HCT116 (cell line): ENCODE measurements at regions of chr18 and their contacts with region 1.

Region 1: DNA sequence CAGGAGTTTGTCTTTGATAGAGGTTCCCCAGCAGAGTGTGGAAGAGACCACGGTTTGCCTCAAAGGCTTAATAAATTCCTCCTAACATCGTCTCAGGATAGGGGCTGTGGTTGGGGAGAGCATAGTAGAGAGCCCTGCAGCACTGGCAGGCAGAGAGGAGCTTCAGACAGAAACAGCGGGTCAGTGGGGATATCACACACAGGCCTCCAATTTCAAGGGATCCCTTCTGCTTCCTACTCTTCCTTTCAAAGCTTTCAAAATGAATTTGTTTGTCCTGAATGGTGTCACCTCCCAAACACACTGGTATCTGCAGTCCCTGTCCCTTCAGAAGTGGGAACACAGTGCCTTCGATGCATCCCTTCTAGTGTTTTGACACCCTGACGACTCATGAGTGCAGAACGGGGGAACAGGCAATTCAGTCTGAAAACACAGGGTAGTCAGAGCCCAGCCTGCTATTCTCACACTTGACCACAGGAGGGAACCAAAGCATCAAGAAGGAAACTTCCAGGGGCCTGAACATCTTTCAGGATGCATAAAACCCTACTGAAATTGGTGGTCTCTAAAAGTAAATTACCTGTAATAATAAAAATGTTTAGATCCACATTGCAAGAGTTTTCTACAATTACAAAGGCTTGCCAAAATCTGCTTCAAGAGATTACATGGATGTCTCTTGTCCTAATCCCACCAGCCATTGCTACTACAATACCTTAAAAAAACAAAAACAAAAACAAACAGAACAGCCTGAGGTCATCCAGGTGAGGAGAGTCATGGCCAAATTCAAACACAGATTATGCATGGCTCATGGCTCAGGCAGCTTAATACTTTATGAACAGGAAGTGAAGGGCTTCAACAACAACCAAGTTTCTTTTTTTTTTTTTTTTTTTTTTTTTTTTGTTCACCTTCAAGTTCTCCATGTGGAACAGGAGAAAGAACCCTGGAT is 49.8 kb downstream of the SLC14A2 start:
- DNase-seq: peak; percentile 37
- ATAC-seq: peak; percentile 85
- H3K4me3 ChIP-seq: no peak overlapping the region
- H3K27ac ChIP-seq: no peak overlapping the region
- H3K4me1 ChIP-seq: no peaks in the 10 kb centered on the region
- H3K27me3 ChIP-seq: no peaks in the 10 kb centered on the region
- CTCF ChIP-seq: peak; percentile 73 to 95 (median 90)
- POLR2A ChIP-seq: no peak
- RAD21 ChIP-seq: peak; percentile 85

Region 2: DNA sequence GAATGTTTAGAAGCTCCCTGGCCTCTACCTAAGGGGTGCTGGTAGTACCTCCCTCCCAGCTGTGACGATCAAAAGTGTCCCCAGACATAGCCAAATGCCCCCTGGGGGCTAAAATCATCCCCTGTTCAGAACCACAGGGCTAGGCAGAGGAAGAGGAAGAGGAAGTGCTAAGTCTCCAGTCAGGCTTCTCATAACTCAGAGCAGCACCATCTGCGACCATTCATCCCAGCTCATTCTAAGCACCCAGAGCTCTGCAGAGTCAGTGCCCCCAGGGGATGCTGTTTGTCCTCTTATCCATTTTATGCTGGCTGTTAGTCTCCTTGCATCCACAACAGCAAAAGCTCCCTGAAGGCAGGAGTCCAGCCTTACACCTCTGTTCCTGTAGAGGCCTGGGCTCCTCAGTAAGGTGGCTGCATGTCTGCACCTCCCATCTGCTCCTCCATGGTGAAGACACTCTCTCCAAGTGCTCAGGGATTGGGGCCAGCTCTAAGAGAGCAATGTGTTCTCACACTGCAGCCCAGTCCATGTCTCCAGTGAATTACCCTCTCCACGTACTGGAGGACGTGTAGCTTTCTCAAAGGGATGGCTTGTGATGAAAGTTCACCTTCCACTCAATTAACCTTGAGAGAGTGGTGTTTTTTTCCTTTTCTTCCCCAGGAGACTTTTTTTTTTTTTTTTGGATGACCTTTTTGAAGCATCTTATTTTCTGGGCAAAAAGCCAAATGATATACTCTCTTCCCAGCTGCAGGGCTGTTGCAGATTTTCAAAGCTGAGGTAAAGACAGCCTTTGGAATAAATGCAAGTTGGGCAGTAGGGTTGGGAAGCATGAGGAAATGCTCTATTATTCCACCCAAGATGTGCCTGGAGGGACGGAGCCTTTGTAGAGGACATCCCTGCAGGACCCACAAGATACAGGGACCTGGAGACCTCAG is 208.7 kb before region 1 on chr18:
- CTCF ChIA-PET with region 1: no interaction called
- POLR2A ChIA-PET with region 1: no interaction called
- RAD21 ChIA-PET with region 1: no interaction called
- intact Hi-C with region 1: no loop called
- DNase-seq: no peak
- ATAC-seq: no peak
- H3K4me3 ChIP-seq: no peak overlapping the region
- H3K27ac ChIP-seq: no peak overlapping the region
- H3K4me1 ChIP-seq: no peaks in the 10 kb centered on the region
- H3K27me3 ChIP-seq: no peaks in the 10 kb centered on the region
- CTCF ChIP-seq: no peak
- POLR2A ChIP-seq: no peak
- RAD21 ChIP-seq: no peak

Region 3: DNA sequence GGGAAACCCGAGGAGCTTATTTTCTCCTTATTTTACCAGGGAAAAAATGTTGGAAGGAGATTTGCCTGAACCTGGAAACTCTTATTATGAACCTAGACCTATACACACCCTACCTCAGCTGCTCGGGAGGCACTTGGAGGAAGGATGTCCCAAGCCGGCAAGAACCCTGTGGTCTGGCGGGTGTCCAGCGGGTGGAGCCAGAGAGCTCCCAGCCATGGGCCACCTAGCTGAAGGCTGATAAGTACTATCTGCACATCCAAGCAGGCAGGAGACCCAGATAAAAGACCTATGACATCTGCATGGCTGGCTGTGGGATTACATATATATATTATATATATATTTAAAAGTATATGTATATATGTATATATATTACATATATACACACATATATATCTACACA is 57.8 kb after region 1 on chr18:
- CTCF ChIA-PET with region 1: no interaction called
- POLR2A ChIA-PET with region 1: no interaction called
- RAD21 ChIA-PET with region 1: no interaction called
- intact Hi-C with region 1: loop called (anchors 2 kb)
- DNase-seq: peak; percentile 57
- ATAC-seq: peak; percentile 100
- H3K4me3 ChIP-seq: no peak overlapping the region
- H3K27ac ChIP-seq: no peak overlapping the region
- H3K4me1 ChIP-seq: no peaks in the 10 kb centered on the region
- H3K27me3 ChIP-seq: 0 out of 2 replicates have a peak, but pooled peaks cover 6% of the 10 kb centered on the region
- CTCF ChIP-seq: peak; percentile 74 to 94 (median 78)
- POLR2A ChIP-seq: no peak
- RAD21 ChIP-seq: peak; percentile 82

Region 4: GRCh38 chr18:45793306-45793965 is 128.3 kb after region 1 on chr18:
- CTCF ChIA-PET with region 1: no interaction called
- POLR2A ChIA-PET with region 1: no interaction called
- RAD21 ChIA-PET with region 1: no interaction called
- intact Hi-C with region 1: no loop called
- DNase-seq: peak; percentile 75
- ATAC-seq: peak; percentile 91
- H3K4me3 ChIP-seq: no peak overlapping the region
- H3K27ac ChIP-seq: peak overlapping the region; percentile 35; the same call in 1 of the 2 replicates
- H3K4me1 ChIP-seq: peaks cover 8 to 16% of the 10 kb centered on the region in 2 experiments
- H3K27me3 ChIP-seq: no peaks in the 10 kb centered on the region
- CTCF ChIP-seq: no peak
- POLR2A ChIP-seq: no peak
- RAD21 ChIP-seq: peak; percentile 20; the same call in 1 of the 2 replicates

Region 5: GRCh38 chr18:45910405-45911023 is 245.4 kb after region 1 on chr18:
- CTCF ChIA-PET with region 1: interaction called, 23 read pairs
- POLR2A ChIA-PET with region 1: no interaction called
- RAD21 ChIA-PET with region 1: no interaction called
- intact Hi-C with region 1: loop called (anchors 1 kb)
- DNase-seq: peak; percentile 36
- ATAC-seq: peak; percentile 98
- H3K4me3 ChIP-seq: no peak overlapping the region
- H3K27ac ChIP-seq: no peak overlapping the region
- H3K4me1 ChIP-seq: no peaks in the 10 kb centered on the region
- H3K27me3 ChIP-seq: no peaks in the 10 kb centered on the region
- CTCF ChIP-seq: peak; percentile 65 to 96 (median 91)
- POLR2A ChIP-seq: no peak
- RAD21 ChIP-seq: peak; percentile 76

Region 6: DNA sequence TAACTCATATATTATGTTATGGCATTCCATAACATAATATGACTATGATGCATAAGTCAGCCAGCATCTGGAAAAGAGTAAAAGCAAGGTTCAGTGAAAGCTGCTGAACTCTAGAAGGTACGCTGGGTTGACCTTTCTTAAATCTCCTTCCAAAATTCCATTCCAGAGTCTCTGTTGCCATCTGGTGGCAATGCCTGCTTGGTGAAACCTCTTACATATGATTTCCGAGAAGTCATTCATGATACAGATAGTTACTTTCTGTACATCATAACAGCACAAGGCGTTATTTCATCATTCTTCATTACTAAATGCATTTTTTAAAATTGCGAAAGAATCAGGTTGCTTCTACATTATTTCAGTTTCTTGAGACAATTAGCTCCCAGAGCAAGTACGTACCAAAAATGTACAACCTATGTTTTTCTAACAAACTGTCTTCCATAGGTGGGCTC is 309.0 kb after region 1 on chr18:
- CTCF ChIA-PET with region 1: interaction called, 3 read pairs
- POLR2A ChIA-PET with region 1: no interaction called
- RAD21 ChIA-PET with region 1: no interaction called
- intact Hi-C with region 1: loop called (anchors 1 kb)
- DNase-seq: peak; percentile 63
- ATAC-seq: peak; percentile 86
- H3K4me3 ChIP-seq: peak overlapping the region; percentile 14 to 20; a peak in 3 of 4 replicates
- H3K27ac ChIP-seq: no peak overlapping the region
- H3K4me1 ChIP-seq: peaks cover 5 to 8% of the 10 kb centered on the region in 2 experiments; a peak in 3 of 4 replicates
- H3K27me3 ChIP-seq: no peaks in the 10 kb centered on the region
- CTCF ChIP-seq: peak; percentile 76 to 86 (median 78); a peak in 5 of 6 replicates
- POLR2A ChIP-seq: no peak
- RAD21 ChIP-seq: peak; percentile 89